Right ventricle myocardium superior (tissue), 1 donor: ENCODE measurements at regions of chr14 and their contacts with region 1.

Region 1: GRCh38 chr14:103910262-103910935 is 17.9 kb upstream of the TDRD9 start:
- DNase-seq: peak; percentile 87
- ATAC-seq: peak; percentile 95

Region 2: GRCh38 chr14:103562429-103563225 is 347.8 kb before region 1 on chr14 and contains the starts of genes BAG5 and COA8:
- intact Hi-C with region 1: loop called (anchors 10 kb)
- DNase-seq: peak; percentile 92
- ATAC-seq: peak; percentile 90
- total RNA-seq, gene BAG5: 14.3 TPM
- total RNA-seq, gene COA8: 60.6 TPM

Region 3: GRCh38 chr14:103808403-103809001 is 101.9 kb before region 1 on chr14:
- intact Hi-C with region 1: loop called (anchors 5 kb)
- DNase-seq: peak; percentile 75
- ATAC-seq: peak; percentile 79